Right cardiac atrium (tissue), 5 donors: ENCODE measurements at regions of chr14 and their contacts with region 1.

Region 1: DNA sequence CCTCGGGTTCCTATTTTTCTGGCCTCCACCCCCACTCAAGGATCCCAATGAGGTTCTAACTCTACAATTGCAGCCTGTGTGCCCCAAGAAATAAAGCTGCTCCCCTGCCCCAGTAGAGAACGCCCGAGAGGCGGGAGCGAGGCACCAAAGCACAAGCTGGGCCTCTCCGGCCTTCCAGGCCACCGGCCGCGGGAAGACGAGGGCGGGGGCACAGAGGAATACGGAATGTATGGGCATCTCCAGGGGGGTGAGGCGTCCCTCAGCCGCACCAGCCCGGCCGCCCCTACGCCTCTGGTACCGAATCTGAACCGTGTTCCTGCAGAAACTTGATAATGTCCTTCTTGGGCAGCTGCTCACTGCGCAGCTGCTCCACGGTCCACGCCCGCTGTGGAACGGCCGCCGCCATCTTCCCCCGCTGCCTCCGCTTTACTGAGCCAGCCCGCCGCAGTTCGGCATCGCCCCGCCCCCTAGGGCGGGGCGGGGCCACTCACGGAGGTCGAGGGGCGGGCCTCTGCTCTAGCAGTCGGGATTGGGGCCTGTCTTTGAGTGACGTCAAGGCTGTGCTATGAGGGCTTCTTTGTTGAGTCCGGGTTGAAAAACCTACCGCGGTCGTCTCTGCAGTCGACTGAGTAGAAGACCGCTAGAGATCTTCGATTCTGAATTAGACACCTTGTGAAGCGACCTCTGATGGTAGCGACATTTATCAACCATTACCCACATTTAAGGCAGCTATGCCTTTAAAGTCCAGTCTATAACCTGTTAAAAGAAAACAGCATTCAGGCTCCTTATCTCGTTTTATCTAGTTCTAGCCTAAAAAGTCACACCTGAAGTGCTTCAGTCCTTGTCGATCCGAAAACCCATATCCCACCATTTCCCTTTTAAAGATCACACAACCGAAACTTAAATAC is at the start of gene FKBP3:
- DNase-seq: peak; percentile 95 to 98 (median 98)
- ATAC-seq: peak; percentile 99
- H3K4me3 ChIP-seq: peak within 1 kb of the TSS; percentile 94
- H3K27ac ChIP-seq: peak within 1 kb of the TSS; percentile 92
- H3K4me1 ChIP-seq: no peaks in the 10 kb centered on the region
- H3K27me3 ChIP-seq: no peaks in the 10 kb centered on the region
- total RNA-seq, gene FKBP3: 81.4 to 91.9 (median 87.8) TPM

Region 2: DNA sequence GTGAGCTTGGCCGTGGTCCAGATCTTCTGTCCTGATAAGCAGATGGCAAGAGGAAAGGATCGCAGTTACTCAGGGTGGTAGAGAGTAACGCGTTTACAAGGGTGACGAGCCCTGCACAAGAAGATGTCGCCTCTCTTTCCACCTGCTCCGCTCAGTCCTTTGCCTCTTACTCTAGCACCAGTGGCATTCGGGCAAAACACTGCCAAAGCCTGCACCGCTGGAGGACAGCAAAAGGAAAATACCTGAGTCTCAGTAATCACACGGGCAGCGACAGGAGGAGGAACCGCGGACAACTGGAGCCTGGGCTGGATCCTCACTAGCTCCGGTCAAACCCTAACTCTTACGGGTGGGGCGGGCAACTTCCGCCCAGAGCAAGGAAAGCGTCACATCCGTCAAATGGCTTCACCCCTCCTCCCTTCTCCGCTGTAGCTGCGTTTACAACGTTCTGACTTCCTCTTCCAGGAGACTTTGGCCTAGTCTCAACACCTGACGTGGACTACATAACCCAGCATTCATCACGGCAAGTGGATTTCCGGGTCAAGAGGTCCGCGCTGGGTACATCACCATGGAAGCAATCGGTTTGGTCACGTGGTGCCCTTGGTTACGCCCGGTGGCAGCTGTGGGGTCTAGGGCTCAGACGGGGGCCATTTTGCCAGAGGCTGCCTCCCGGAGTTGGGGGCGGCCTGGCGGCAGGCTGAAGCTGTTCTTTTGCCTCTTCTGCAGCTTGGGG is 172.5 kb before region 1 on chr14 and contains the starts of genes KLHL28 and TOGARAM1:
- intact Hi-C with region 1: loop called in 2 of 4 experiments (anchors 5 to 10 kb)
- DNase-seq: peak; percentile 96 to 98 (median 96)
- ATAC-seq: peak; percentile 98
- H3K4me3 ChIP-seq: peak within 1 kb of the TSS; percentile 89
- H3K27ac ChIP-seq: peak within 1 kb of the TSS; percentile 96
- H3K4me1 ChIP-seq: no peaks in the 10 kb centered on the region
- H3K27me3 ChIP-seq: no peaks in the 10 kb centered on the region
- total RNA-seq, gene KLHL28: 9.4 to 13.0 (median 12.3) TPM
- total RNA-seq, gene TOGARAM1: 18.4 to 26.0 (median 19.6) TPM

Region 3: GRCh38 chr14:45091696-45092095 is 42.6 kb before region 1 on chr14:
- intact Hi-C with region 1: no loop called
- DNase-seq: no peak
- ATAC-seq: no peak
- H3K4me3 ChIP-seq: no peak overlapping the region
- H3K27ac ChIP-seq: no peak overlapping the region
- H3K4me1 ChIP-seq: peaks cover 2% of the 10 kb centered on the region
- H3K27me3 ChIP-seq: no peaks in the 10 kb centered on the region

Region 4: GRCh38 chr14:45253068-45253753 is 118.9 kb after region 1 on chr14 and contains the start of gene MIS18BP1:
- intact Hi-C with region 1: loop called in 1 of 4 experiments (anchors 10 kb)
- DNase-seq: peak; percentile 96 to 98 (median 97)
- ATAC-seq: peak; percentile 97 to 98
- H3K4me3 ChIP-seq: peak within 1 kb of the TSS; percentile 100
- H3K27ac ChIP-seq: peak within 1 kb of the TSS; percentile 99
- H3K4me1 ChIP-seq: peaks cover 2% of the 10 kb centered on the region
- H3K27me3 ChIP-seq: no peaks in the 10 kb centered on the region
- total RNA-seq, gene MIS18BP1: 6.4 to 9.3 (median 8.3) TPM